H1 (cell line): ENCODE measurements at regions of chr13 and their contacts with region 1.

Region 1: DNA sequence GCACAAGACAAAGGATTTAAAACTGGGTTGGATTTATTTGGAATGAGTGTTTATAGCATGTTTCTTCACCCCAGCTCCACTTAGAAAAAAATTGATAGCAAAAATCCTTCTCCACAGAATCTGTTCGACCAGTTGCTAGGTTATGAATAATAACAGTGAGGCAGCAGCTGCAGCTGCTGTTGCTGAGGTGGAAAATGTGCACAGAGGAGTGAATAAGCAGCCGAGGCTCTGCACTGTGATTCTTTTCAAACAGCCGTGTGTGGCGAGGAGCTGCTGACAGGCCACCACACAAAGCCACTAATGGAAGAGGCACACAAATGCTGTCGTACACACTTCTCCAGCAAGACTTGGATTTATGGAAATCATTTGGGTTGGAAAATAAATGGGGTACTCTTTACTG is 6.4 kb upstream of the RASL11A start:
- DNase-seq: no peak
- H3K4me3 ChIP-seq: no peak overlapping the region
- H3K27ac ChIP-seq: no peak overlapping the region
- H3K4me1 ChIP-seq: peaks cover 0 to 2% (median under 1%) of the 10 kb centered on the region in 4 experiments; a peak in 5 of 7 replicates
- H3K27me3 ChIP-seq: peaks cover 0 to 1% (median 0%) of the 10 kb centered on the region in 4 experiments; a peak in 3 of 7 replicates
- CTCF ChIP-seq: no peak
- EP300 ChIP-seq: no peak
- POLR2A ChIP-seq: no peak
- RAD21 ChIP-seq: no peak

Region 2: DNA sequence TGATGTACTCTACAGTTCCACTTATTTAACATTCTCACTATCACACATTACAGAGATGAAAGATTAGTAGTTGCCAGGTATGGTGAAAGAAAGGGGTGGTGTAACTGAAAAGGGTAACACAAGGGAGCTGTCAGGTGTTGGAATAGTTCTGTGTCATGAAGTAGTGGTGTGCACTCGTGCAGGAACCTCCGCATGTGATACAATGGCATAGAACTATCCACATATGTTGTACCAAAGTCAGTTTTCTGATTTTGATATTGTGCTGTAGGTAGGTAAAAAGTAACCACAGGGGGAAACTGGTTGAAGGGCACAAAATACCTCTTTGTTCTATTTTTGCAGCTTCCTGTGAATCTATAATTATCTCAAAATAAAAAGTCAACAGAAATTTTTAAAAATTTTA is 37.2 kb before region 1 on chr13:
- CTCF ChIA-PET with region 1: no interaction called
- POLR2A ChIA-PET with region 1: no interaction called
- DNase-seq: no peak
- H3K4me3 ChIP-seq: no peak overlapping the region
- H3K27ac ChIP-seq: no peak overlapping the region
- H3K4me1 ChIP-seq: no peaks in the 10 kb centered on the region
- H3K27me3 ChIP-seq: no peaks in the 10 kb centered on the region
- CTCF ChIP-seq: no peak
- EP300 ChIP-seq: no peak
- POLR2A ChIP-seq: no peak
- RAD21 ChIP-seq: no peak

Region 3: GRCh38 chr13:27242706-27243105 is 21.5 kb before region 1 on chr13:
- CTCF ChIA-PET with region 1: interaction called, 5 read pairs
- POLR2A ChIA-PET with region 1: interaction called, 76 read pairs
- DNase-seq: no peak
- H3K4me3 ChIP-seq: no peak overlapping the region
- H3K27ac ChIP-seq: no peak overlapping the region
- H3K4me1 ChIP-seq: peaks cover 0 to 10% (median 4%) of the 10 kb centered on the region in 4 experiments; a peak in 5 of 7 replicates
- H3K27me3 ChIP-seq: no peaks in the 10 kb centered on the region
- CTCF ChIP-seq: no peak
- EP300 ChIP-seq: no peak
- POLR2A ChIP-seq: no peak
- RAD21 ChIP-seq: no peak

Region 4: GRCh38 chr13:27251166-27252091 is 12.8 kb before region 1 on chr13 and contains the start of gene RPL21:
- CTCF ChIA-PET with region 1: no interaction called
- POLR2A ChIA-PET with region 1: interaction called, 197 read pairs
- DNase-seq: peak; percentile 80 to 93
- H3K4me3 ChIP-seq: peak within 1 kb of the TSS; percentile 98 to 99 (median 98)
- H3K27ac ChIP-seq: peak within 1 kb of the TSS; percentile 99
- H3K4me1 ChIP-seq: peaks cover 0 to 6% (median 2%) of the 10 kb centered on the region in 4 experiments; a peak in 4 of 7 replicates
- H3K27me3 ChIP-seq: no peaks in the 10 kb centered on the region
- CTCF ChIP-seq: no peak
- EP300 ChIP-seq: peak in 1 of 2 experiments; percentile 48; a peak in 1 of 3 replicates
- POLR2A ChIP-seq: peak; percentile 98 to 99
- RAD21 ChIP-seq: 0 out of 4 replicates have a peak, but pooled peaks of 1 of the 2 experiments have one; percentile 2
- total RNA-seq, gene RPL21: 1,233 and 1,283 TPM in 2 replicates

Region 5: GRCh38 chr13:27415116-27415515 is 150.9 kb after region 1 on chr13:
- CTCF ChIA-PET with region 1: no interaction called
- POLR2A ChIA-PET with region 1: no interaction called
- DNase-seq: no peak
- H3K4me3 ChIP-seq: no peak overlapping the region
- H3K27ac ChIP-seq: no peak overlapping the region
- H3K4me1 ChIP-seq: no peaks in the 10 kb centered on the region
- H3K27me3 ChIP-seq: no peaks in the 10 kb centered on the region
- CTCF ChIP-seq: no peak
- EP300 ChIP-seq: no peak
- POLR2A ChIP-seq: no peak
- RAD21 ChIP-seq: no peak

Region 6: DNA sequence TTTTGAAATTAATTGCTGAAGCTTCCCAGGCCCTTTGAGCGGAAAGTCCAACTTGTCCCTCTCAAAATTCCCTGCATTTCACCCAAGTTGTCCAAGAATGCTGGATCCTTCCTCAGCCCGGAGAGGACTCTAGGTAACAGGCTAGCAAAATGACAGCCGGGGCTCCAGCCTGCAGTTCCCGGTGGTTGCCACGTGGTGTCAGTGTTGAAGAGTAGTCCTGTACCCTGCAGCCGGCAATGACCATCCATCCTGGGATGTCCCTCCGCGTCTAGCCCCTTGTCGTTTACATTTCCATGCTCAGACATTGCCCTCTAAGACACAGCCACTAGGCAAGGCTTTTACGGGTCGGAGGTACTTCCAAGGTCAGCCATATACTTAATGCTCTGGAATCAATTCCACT is 217.6 kb after region 1 on chr13:
- CTCF ChIA-PET with region 1: no interaction called
- POLR2A ChIA-PET with region 1: no interaction called
- DNase-seq: peak; percentile 58 to 95
- H3K4me3 ChIP-seq: no peak overlapping the region
- H3K27ac ChIP-seq: no peak overlapping the region
- H3K4me1 ChIP-seq: no peaks in the 10 kb centered on the region
- H3K27me3 ChIP-seq: no peaks in the 10 kb centered on the region
- CTCF ChIP-seq: peak; percentile 84 to 99 (median 99)
- EP300 ChIP-seq: no peak
- POLR2A ChIP-seq: no peak
- RAD21 ChIP-seq: peak; percentile 89 to 92